Mucosa of descending colon (tissue), 3 donors: ENCODE measurements at regions of chr7 and their contacts with region 1.

Region 1: DNA sequence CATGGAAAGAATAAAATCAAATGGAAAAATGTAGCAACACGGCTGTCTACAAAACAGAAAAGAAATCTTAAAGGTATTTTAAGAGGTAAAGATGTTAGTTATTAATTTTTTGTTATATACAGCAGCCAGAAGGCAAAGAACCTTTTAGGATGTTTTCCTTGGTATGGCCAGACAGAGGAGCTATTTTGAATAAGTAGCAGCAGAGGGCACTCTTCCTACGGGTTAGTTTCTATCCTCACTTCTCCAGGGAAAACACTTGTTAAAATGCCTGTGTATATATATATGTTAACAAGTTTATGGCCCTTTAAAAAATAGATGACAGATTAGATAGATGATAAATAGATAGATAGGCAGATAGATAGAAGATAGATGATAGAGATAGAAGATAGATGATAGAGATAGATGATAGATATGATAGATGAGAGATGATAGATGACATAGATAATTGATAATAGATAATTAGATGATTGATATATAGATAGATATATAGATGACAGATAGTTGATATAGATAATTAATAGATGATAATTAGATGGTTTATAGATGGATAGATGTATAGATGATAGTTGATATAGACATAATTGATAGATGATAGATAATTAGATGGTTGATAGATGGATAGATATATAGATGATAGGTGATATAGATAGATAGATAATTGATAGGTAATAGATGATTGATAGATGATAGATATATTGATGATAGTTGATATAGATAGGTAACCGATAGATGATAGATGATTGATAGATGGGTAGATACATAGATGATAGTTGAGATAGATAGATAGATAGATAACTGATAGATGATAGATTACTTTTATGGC is 57.8 kb upstream of the WIPF3 start:
- DNase-seq: peak in 1 of 3 donors; percentile 13
- ATAC-seq: peak; percentile 81
- H3K4me3 ChIP-seq: no peak overlapping the region
- H3K4me1 ChIP-seq: no peaks in the 10 kb centered on the region
- CTCF ChIP-seq: peak; percentile 26

Region 2: DNA sequence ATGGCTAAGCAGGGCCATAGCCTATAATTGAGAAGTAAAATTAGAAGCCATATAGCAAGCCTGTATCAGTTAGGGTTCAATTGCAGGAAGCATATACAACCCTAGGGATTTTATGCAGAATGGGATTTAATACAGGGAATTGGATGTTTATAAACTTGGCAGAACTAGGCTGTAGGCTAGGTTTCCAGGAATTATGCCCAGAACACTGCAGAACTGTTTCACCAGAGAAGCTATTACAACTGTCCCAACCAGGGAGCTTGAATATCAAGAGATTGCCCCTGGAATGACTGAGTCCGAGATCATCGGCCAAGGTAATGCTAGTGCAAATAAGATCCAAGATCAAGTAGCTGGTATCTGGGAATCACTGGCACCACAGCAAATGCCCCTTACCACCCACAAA is 120.9 kb before region 1 on chr7:
- intact Hi-C with region 1: loop called in 1 of 2 experiments (anchors 5 kb)
- DNase-seq: no peak
- ATAC-seq: no peak
- H3K4me3 ChIP-seq: no peak overlapping the region
- H3K4me1 ChIP-seq: no peaks in the 10 kb centered on the region
- CTCF ChIP-seq: no peak

Region 3: GRCh38 chr7:29652556-29652955 is 95.9 kb before region 1 on chr7:
- intact Hi-C with region 1: no loop called
- DNase-seq: no peak
- ATAC-seq: no peak
- H3K4me3 ChIP-seq: no peak overlapping the region
- H3K4me1 ChIP-seq: no peaks in the 10 kb centered on the region
- CTCF ChIP-seq: no peak

Region 4: GRCh38 chr7:30238721-30239441 is 490.4 kb after region 1 on chr7:
- intact Hi-C with region 1: no loop called
- DNase-seq: peak in 2 of 3 donors; percentile 47 to 67
- ATAC-seq: peak; percentile 41
- H3K4me3 ChIP-seq: no peak overlapping the region
- H3K4me1 ChIP-seq: no peaks in the 10 kb centered on the region
- CTCF ChIP-seq: no peak